ENCODE measurements at regions of chr1 and their contacts with region 1.

Region 1: DNA sequence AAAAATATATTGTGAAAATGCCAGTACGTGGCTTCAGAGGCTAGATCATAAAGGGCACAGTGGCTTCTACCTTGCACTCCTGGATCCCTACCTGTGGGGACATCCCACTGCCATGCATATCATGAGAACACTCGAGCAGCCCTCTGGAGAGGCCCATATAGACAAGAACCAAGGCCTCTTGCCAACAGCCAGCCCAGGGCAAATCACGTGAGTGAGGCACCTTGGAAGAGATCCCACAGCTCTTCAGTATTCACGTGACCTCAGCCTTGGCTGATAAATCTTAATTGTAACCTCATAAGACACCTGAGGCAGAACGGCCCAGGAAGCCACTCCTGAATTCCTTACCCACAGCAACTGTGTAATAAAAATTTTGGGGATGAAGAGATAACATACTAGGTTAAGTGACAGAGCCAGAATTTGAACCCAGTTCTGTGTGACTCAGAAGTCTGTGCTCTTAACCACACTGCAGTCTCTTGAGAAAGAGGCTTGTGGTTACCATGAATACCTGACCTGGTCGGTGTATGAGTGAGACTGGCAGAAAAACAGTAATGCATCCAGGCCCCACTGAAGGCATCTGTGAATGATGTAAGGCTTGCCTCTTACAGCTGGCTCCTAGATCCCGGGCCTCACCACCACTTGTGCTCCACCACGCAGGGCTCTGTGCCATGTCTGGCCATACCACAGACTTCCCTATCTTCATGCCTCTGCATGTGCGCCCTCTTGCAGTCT is 6.9 kb upstream of the A3GALT2 start:
- DNase-seq: peak; percentile 48 to 68 (median 60)
- H3K4me3 ChIP-seq: peak overlapping the region in 1 of 3 experiments; percentile 12
- H3K4me3 Mint-ChIP-seq: no peak overlapping the region
- H3K27ac ChIP-seq: peak overlapping the region; percentile 60 to 81
- H3K27ac Mint-ChIP-seq: peak overlapping the region; percentile 72 to 92 (median 79)
- H3K4me1 ChIP-seq: peaks cover 50 to 59% of the 10 kb centered on the region in 2 donors
- H3K4me1 Mint-ChIP-seq: peaks cover 56% of the 10 kb centered on the region
- H3K27me3 ChIP-seq: no peaks in the 10 kb centered on the region
- H3K27me3 Mint-ChIP-seq: peaks cover 0 to 1% (median 0%) of the 10 kb centered on the region in 3 donors
- CTCF ChIP-seq: no peak

Region 2: DNA sequence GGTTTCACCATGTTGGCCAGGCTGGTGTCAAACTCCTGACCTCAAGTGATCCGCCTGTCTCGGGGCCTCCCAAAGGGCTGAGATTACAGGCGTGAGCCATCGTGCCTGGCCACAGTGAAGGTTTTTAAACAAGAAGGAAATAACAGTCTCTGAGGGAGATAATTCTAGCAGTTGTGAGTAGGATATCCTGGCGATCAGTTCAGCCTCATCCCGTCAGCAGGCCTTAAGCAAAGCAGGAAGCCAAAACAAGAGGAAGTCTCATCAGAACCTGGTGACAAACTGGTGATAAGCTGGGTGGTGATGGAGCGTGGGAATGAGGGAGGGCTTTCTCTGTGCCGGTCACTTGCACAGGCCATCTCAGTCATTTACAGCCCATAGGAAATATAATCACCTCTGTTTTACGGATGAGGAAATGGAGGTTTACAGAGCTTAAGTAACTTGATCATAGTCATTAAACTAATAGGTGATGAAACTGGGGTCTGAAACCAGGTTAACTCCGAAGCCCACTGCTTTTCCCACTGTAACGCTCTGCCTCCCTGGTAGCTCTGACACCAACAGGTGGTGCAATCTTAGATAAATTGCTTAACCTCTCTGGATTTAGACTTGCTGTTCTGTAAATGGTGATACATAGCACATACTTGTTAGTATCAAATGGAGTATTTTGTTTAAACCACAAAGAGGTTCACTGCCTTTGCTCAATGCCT is 33.9 kb after region 1 on chr1:
- intact Hi-C with region 1: loop called in 1 of 2 experiments (anchors 5 kb)
- DNase-seq: peak; percentile 60 to 68 (median 67)
- H3K4me3 ChIP-seq: no peak overlapping the region
- H3K4me3 Mint-ChIP-seq: peak overlapping the region in 1 of 2 donors; percentile 0
- H3K27ac ChIP-seq: no peak overlapping the region
- H3K27ac Mint-ChIP-seq: peak overlapping the region in 5 of 7 donors; percentile 3 to 85 (median 53)
- H3K4me1 ChIP-seq: peaks cover 5 to 7% of the 10 kb centered on the region in 2 donors
- H3K4me1 Mint-ChIP-seq: peaks cover 20% of the 10 kb centered on the region
- H3K27me3 ChIP-seq: no peaks in the 10 kb centered on the region
- H3K27me3 Mint-ChIP-seq: peaks cover 0 to 3% (median 2%) of the 10 kb centered on the region in 3 donors
- CTCF ChIP-seq: no peak